ENCODE measurements at regions of chr9 and their contacts with region 1.

Region 1: DNA sequence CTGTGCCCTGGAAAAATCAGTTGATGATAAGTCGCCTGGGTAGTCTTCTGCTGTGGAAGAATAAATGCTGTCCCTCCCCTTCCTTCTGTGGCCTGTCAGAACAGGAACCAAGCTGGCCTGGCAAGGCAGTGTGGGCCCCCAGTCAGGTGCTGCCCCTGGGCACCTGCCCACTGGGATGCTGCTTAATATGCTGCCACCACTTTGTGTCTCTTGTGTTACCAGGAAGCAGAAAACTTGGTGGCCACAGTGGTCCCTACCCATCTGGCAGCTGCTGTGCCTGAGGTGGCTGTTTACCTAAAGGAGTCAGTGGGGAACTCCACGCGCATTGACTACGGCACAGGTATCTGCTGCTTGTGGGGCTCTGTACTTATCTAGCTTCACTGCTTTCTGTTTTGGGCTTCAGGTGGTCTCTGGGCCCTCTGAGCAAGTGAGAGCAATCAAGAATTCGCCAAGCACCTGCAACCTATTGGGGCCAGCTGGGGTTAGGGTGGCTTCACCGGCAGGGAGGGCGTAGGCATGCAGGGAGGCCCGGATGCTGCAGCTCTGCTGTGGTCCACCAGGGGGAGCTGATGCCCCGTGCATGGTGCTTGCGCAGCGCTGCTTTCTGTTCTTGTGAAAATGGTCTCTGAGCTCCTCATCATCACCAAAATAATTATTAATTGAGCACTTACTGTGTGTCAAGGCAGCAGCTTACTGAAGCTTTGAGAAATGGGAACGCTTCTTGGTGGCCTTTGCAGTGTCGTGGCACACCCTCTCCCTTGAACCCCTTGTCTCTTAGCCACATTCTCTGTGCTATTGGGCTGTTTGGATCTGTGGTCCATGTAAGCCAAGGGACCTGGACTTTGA is 20.3 kb downstream of the PTPA start:
- DNase-seq: peak; percentile 72 to 93
- ATAC-seq: peak; percentile 93 to 96
- H3K4me3 ChIP-seq: no peak overlapping the region
- H3K27ac ChIP-seq: peak overlapping the region; percentile 30 to 63; a peak in 4 of 6 replicates
- H3K4me1 ChIP-seq: peaks cover 7% of the 10 kb centered on the region; the same call in 1 of the 3 replicates
- CTCF ChIP-seq: peak; percentile 94
- EP300 ChIP-seq: no peak
- POLR2A ChIP-seq: no peak
- RAD21 ChIP-seq: peak; percentile 93 to 95

Region 2: DNA sequence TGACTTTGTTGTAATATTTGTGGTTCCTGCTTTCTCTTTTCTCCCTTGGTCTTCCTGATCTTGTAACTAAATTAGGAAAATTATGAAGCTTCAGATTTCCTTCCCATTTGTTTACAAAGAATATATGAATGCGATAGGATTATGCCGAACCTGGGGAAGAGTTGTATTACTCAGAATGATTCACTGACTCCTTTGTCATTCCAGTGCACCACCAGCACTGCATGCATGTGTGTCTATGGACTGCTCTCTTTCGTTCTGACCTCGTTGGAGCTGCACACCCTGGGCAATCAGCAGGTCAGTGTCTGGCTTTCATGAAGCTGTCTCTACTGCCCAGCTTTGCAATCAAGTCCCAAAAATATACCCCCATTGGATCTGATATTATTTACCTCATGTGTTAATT is 158.6 kb before region 1 on chr9:
- CTCF ChIA-PET with region 1: no interaction called
- POLR2A ChIA-PET with region 1: no interaction called
- DNase-seq: peak; percentile 23 to 32
- ATAC-seq: peak; percentile 68 to 86; a peak in 4 of 6 replicates
- H3K4me3 ChIP-seq: no peak overlapping the region
- H3K27ac ChIP-seq: no peak overlapping the region
- H3K4me1 ChIP-seq: peaks cover 14% of the 10 kb centered on the region; the same call in 2 of the 3 replicates
- CTCF ChIP-seq: no peak
- EP300 ChIP-seq: no peak
- POLR2A ChIP-seq: no peak
- RAD21 ChIP-seq: no peak

Region 3: GRCh38 chr9:129052592-129052991 is 78.9 kb before region 1 on chr9:
- CTCF ChIA-PET with region 1: no interaction called
- POLR2A ChIA-PET with region 1: no interaction called
- DNase-seq: peak in 1 of 2 experiments; percentile 35
- ATAC-seq: no peak; a peak in 2 of 6 replicates
- H3K4me3 ChIP-seq: no peak overlapping the region
- H3K27ac ChIP-seq: no peak overlapping the region
- H3K4me1 ChIP-seq: peaks cover 13% of the 10 kb centered on the region
- CTCF ChIP-seq: no peak
- EP300 ChIP-seq: no peak
- POLR2A ChIP-seq: no peak
- RAD21 ChIP-seq: no peak

Region 4: GRCh38 chr9:129110740-129111527 is 20.6 kb before region 1 on chr9 and contains the starts of genes CRAT and PTPA:
- CTCF ChIA-PET with region 1: interaction called, 22 read pairs
- POLR2A ChIA-PET with region 1: interaction called, 3 read pairs
- DNase-seq: peak; percentile 96 to 97
- ATAC-seq: peak; percentile 78 to 91
- H3K4me3 ChIP-seq: peak within 1 kb of the TSS; percentile 61
- H3K27ac ChIP-seq: peak within 1 kb of the TSS; percentile 92 to 97
- H3K4me1 ChIP-seq: peaks cover 32% of the 10 kb centered on the region
- CTCF ChIP-seq: no peak
- EP300 ChIP-seq: no peak
- POLR2A ChIP-seq: peak; percentile 97
- RAD21 ChIP-seq: no peak
- polyA plus RNA-seq, gene CRAT: 20.5 and 20.8 TPM in 2 replicates
- polyA plus RNA-seq, gene PTPA: 140 and 149 TPM in 2 replicates

Region 5: GRCh38 chr9:129121483-129121882 is 10.0 kb before region 1 on chr9:
- CTCF ChIA-PET with region 1: interaction called, 271 read pairs
- POLR2A ChIA-PET with region 1: no interaction called
- DNase-seq: no peak
- ATAC-seq: no peak
- H3K4me3 ChIP-seq: no peak overlapping the region
- H3K27ac ChIP-seq: no peak overlapping the region
- H3K4me1 ChIP-seq: peaks cover 21% of the 10 kb centered on the region; the same call in 2 of the 3 replicates
- CTCF ChIP-seq: no peak
- EP300 ChIP-seq: no peak
- POLR2A ChIP-seq: no peak
- RAD21 ChIP-seq: no peak

Region 6: DNA sequence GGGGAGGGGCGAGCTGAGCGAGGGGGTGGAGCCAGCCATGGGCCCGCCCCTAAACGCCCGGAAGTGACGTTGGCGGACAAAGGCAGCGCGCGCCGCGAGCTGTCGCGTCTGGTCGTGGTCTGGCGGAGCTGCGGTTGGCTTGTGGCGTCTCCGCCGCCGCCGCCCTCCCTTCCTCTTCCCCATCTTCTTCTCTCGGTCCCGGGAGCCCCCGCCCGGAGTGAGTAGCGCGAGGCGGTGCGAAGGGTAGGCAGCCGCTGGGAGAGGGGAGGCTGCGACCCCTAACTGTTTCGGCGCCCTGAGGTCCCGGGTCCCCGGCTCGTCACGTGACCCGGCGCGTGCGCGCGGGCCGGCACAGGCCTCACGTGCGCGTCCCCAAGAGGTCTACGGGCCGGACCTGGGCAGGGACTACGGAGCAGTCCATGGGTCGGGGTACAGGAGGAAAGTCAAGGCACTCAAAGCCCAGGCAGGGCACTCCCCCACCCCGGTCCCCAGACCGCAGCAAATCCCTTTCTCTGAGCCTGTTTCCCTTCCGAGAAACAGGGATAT is 494.6 kb after region 1 on chr9 and contains the start of gene NTMT1:
- CTCF ChIA-PET with region 1: interaction called, 947 read pairs
- POLR2A ChIA-PET with region 1: interaction called, 16 read pairs
- DNase-seq: peak; percentile 77 to 87
- ATAC-seq: peak; percentile 78 to 84
- H3K4me3 ChIP-seq: peak within 1 kb of the TSS; percentile 69
- H3K27ac ChIP-seq: peak within 1 kb of the TSS; percentile 78 to 98
- H3K4me1 ChIP-seq: peaks cover 28% of the 10 kb centered on the region
- CTCF ChIP-seq: no peak
- EP300 ChIP-seq: no peak
- POLR2A ChIP-seq: peak; percentile 93
- RAD21 ChIP-seq: no peak
- polyA plus RNA-seq, gene NTMT1: 39.2 and 49.4 TPM in 2 replicates